ENCODE measurements at regions of chr6 and their contacts with region 1.

Region 1: GRCh38 chr6:135851442-135852271 is at the start of gene PDE7B:
- DNase-seq: peak; percentile 52
- H3K4me3 Mint-ChIP-seq: peak within 1 kb of the TSS; percentile 88
- H3K27ac Mint-ChIP-seq: peak within 1 kb of the TSS; percentile 88
- H3K4me1 Mint-ChIP-seq: peaks cover 47% of the 10 kb centered on the region
- H3K27me3 Mint-ChIP-seq: peaks cover 5% of the 10 kb centered on the region
- total RNA-seq, gene PDE7B: 10.7 and 11.1 TPM in 2 replicates

Region 2: GRCh38 chr6:135411339-135411738 is 440.3 kb before region 1 on chr6:
- intact Hi-C with region 1: no loop called
- DNase-seq: no peak
- H3K4me3 Mint-ChIP-seq: no peak overlapping the region
- H3K27ac Mint-ChIP-seq: no peak overlapping the region
- H3K4me1 Mint-ChIP-seq: no peaks in the 10 kb centered on the region
- H3K27me3 Mint-ChIP-seq: no peaks in the 10 kb centered on the region

Region 3: GRCh38 chr6:135568366-135568765 is 283.3 kb before region 1 on chr6:
- intact Hi-C with region 1: loop called (anchors 5 kb)
- DNase-seq: peak; percentile 51
- H3K4me3 Mint-ChIP-seq: peak overlapping the region; percentile 3
- H3K27ac Mint-ChIP-seq: peak overlapping the region; percentile 93
- H3K4me1 Mint-ChIP-seq: peaks cover 64% of the 10 kb centered on the region
- H3K27me3 Mint-ChIP-seq: no peaks in the 10 kb centered on the region

Region 4: GRCh38 chr6:135675862-135676261 is 175.8 kb before region 1 on chr6:
- intact Hi-C with region 1: loop called (anchors 5 kb)
- DNase-seq: peak; percentile 12
- H3K4me3 Mint-ChIP-seq: no peak overlapping the region
- H3K27ac Mint-ChIP-seq: peak overlapping the region; percentile 62
- H3K4me1 Mint-ChIP-seq: peaks cover 49% of the 10 kb centered on the region
- H3K27me3 Mint-ChIP-seq: no peaks in the 10 kb centered on the region

Region 5: GRCh38 chr6:135839121-135839520 is 12.5 kb before region 1 on chr6:
- intact Hi-C with region 1: loop called (anchors 1 kb)
- DNase-seq: no peak
- H3K4me3 Mint-ChIP-seq: no peak overlapping the region
- H3K27ac Mint-ChIP-seq: no peak overlapping the region
- H3K4me1 Mint-ChIP-seq: peaks cover 9% of the 10 kb centered on the region
- H3K27me3 Mint-ChIP-seq: peaks cover under 1% of the 10 kb centered on the region

Region 6: GRCh38 chr6:135880066-135880972 is 28.7 kb after region 1 on chr6:
- intact Hi-C with region 1: loop called (anchors 2 kb)
- DNase-seq: peak; percentile 61
- H3K4me3 Mint-ChIP-seq: peak overlapping the region; percentile 79
- H3K27ac Mint-ChIP-seq: peak overlapping the region; percentile 97
- H3K4me1 Mint-ChIP-seq: peaks cover 46% of the 10 kb centered on the region
- H3K27me3 Mint-ChIP-seq: no peaks in the 10 kb centered on the region

Region 7: DNA sequence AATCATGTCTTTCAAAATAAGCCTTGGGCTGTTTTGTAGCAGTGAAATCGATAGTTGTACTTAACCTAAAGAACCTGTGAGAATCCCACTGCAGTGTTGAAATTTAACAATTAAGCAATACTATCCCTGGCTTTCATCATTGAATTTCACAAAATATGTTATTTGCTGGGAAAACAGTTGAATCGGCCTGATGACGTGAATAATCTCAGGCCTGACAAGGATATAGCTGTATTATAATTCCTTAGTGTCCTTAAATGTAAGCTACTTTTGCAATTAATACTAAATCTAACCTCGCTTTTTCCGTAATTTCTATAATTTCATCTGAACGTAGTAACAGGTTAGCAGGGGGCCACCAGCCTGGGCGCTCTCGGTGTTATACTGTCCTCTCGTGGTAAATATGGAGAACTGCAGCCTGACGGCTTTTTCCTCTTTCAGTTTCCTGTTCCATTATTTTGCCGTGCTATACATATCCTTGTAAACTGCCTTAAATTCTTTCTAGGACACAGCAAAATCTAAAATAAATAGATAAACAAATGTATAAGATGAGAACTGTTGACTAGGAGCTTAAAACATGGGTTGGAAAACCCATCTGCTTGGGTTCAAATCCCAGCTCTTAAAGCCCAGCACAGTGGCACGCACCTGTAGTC is 374.5 kb after region 1 on chr6:
- intact Hi-C with region 1: loop called (anchors 10 kb)
- DNase-seq: peak; percentile 35
- H3K4me3 Mint-ChIP-seq: peak overlapping the region; percentile 0
- H3K27ac Mint-ChIP-seq: peak overlapping the region; percentile 25
- H3K4me1 Mint-ChIP-seq: peaks cover 27% of the 10 kb centered on the region
- H3K27me3 Mint-ChIP-seq: no peaks in the 10 kb centered on the region

Region 8: GRCh38 chr6:136317021-136317694 is 465.5 kb after region 1 on chr6:
- intact Hi-C with region 1: no loop called
- DNase-seq: peak; percentile 41
- H3K4me3 Mint-ChIP-seq: no peak overlapping the region
- H3K27ac Mint-ChIP-seq: no peak overlapping the region
- H3K4me1 Mint-ChIP-seq: no peaks in the 10 kb centered on the region
- H3K27me3 Mint-ChIP-seq: peaks cover 9% of the 10 kb centered on the region

Measured in activated T-helper 1 cell treated with anti-CD3 and anti-CD28 coated beads, Interleukin-12 subunit alpha, Interleukin-12 subunit beta, Interleukin-2, Interleukin-4 antibody, amounts not matched to agents 30 ng/mL and 10 ng/mL and 1 ng/mL, durations not matched to agents 14 hours and 24 hours and 36 hours (primary cell).